ENCODE measurements at regions of chr2 and their contacts with region 1.

Region 1: GRCh38 chr2:18378020-18378653 is 182.3 kb downstream of the RDH14 start:
- DNase-seq: peak; percentile 49
- ATAC-seq: peak; percentile 79
- H3K4me3 ChIP-seq: no peak overlapping the region
- H3K27ac ChIP-seq: no peak overlapping the region
- H3K4me1 ChIP-seq: no peaks in the 10 kb centered on the region
- H3K27me3 ChIP-seq: no peaks in the 10 kb centered on the region; the same call in 1 of the 2 replicates
- CTCF ChIP-seq: peak; percentile 84
- POLR2A ChIP-seq: no peak
- RAD21 ChIP-seq: peak; percentile 90

Region 2: GRCh38 chr2:17851731-17852585 is 526.2 kb before region 1 on chr2:
- CTCF ChIA-PET with region 1: interaction called, 3 read pairs
- POLR2A ChIA-PET with region 1: no interaction called
- dilution Hi-C with region 1: no loop called
- in situ Hi-C with region 1: loop called (anchors 5 kb)
- intact Hi-C with region 1: loop called (anchors 1 kb)
- DNase-seq: peak; percentile 69
- ATAC-seq: peak; percentile 98
- H3K4me3 ChIP-seq: no peak overlapping the region
- H3K27ac ChIP-seq: no peak overlapping the region
- H3K4me1 ChIP-seq: no peaks in the 10 kb centered on the region
- H3K27me3 ChIP-seq: peaks cover 5% of the 10 kb centered on the region
- CTCF ChIP-seq: peak; percentile 98
- POLR2A ChIP-seq: peak; percentile 71
- RAD21 ChIP-seq: peak; percentile 98

Region 3: DNA sequence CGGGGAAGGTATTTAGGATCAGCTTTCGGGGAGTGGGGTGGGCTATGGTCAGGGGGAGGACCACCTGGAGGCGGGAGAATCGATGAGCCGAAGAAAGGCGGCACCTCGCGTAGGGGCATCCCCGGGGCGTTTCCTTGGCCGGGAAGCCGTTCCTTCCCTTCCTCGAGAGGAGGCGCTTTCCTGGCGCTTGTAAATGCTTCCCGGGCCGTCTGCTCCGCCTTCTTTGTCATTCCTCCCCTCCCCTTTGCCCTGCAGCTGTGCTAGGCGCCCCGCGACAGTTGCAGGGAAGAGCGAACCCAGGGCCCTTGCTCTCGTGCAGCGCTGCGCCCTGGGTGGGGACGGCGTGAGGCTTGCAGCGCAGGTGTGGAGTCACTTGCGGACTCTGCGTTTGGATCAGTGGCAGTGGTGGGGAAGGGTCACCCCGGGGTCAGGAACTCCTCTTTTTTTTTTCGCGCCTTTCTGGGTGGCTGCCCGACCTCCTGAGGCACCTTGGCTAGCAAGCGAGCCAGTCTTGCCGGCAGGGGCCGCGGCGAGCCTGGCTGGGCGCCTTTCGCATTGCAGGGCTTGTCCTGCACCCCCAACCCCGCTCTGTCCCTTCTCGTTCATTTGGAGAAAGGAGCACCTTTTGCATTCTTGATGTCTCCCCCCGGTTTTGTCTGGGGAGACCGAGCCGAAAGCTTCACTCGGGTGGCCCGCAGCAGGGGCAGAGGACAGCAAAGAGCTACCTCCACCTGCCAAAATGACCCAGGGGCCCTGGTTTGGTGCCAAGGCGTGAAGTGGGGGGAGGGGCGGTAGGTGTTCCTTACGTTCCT is 498.8 kb before region 1 on chr2:
- CTCF ChIA-PET with region 1: no interaction called
- POLR2A ChIA-PET with region 1: no interaction called
- dilution Hi-C with region 1: no loop called
- in situ Hi-C with region 1: no loop called
- intact Hi-C with region 1: loop called (anchors 1 kb)
- DNase-seq: peak; percentile 33
- ATAC-seq: peak; percentile 44
- H3K4me3 ChIP-seq: peak overlapping the region; percentile 83
- H3K27ac ChIP-seq: no peak overlapping the region
- H3K4me1 ChIP-seq: no peaks in the 10 kb centered on the region
- H3K27me3 ChIP-seq: peaks cover 32% of the 10 kb centered on the region
- CTCF ChIP-seq: peak; percentile 35
- POLR2A ChIP-seq: no peak
- RAD21 ChIP-seq: peak; percentile 28; the same call in 1 of the 2 replicates

Region 4: DNA sequence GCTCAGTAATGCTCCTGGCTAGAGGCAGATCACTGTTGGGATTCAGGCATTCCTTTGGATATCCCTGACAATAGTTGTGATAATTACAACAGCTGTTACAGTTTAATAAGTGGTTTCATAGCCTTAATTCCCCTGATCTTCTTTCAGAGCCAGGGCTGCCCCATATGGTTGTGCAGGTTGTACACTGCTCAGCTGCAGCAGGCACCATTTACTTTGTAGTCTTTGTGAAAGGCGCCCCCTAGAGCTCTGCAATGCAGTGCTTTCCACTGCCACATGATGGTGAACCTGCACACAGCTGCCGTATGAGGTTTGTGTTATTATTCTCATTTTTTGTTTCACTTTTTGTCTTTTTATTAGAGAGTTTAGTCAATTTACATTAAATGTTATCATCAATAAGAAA is 260.5 kb before region 1 on chr2:
- CTCF ChIA-PET with region 1: no interaction called
- POLR2A ChIA-PET with region 1: no interaction called
- dilution Hi-C with region 1: no loop called
- in situ Hi-C with region 1: no loop called
- intact Hi-C with region 1: loop called (anchors 2 kb)
- DNase-seq: peak; percentile 41
- ATAC-seq: peak; percentile 59
- H3K4me3 ChIP-seq: no peak overlapping the region
- H3K27ac ChIP-seq: no peak overlapping the region
- H3K4me1 ChIP-seq: no peaks in the 10 kb centered on the region
- H3K27me3 ChIP-seq: no peaks in the 10 kb centered on the region
- CTCF ChIP-seq: peak; percentile 88
- POLR2A ChIP-seq: no peak
- RAD21 ChIP-seq: peak; percentile 59

Region 5: GRCh38 chr2:18209919-18210639 is 168.1 kb before region 1 on chr2:
- CTCF ChIA-PET with region 1: no interaction called
- POLR2A ChIA-PET with region 1: no interaction called
- dilution Hi-C with region 1: no loop called
- in situ Hi-C with region 1: loop called (anchors 10 kb)
- intact Hi-C with region 1: no loop called
- DNase-seq: peak; percentile 78
- ATAC-seq: peak; percentile 44; the same call in 1 of the 2 replicates
- H3K4me3 ChIP-seq: no peak overlapping the region
- H3K27ac ChIP-seq: no peak overlapping the region
- H3K4me1 ChIP-seq: no peaks in the 10 kb centered on the region
- H3K27me3 ChIP-seq: no peaks in the 10 kb centered on the region; the same call in 1 of the 2 replicates
- CTCF ChIP-seq: no peak
- POLR2A ChIP-seq: no peak
- RAD21 ChIP-seq: no peak

Measured in IMR-90 (cell line).